GM12878 (cell line): ENCODE measurements at regions of chr1 and their contacts with region 1.

Region 1: DNA sequence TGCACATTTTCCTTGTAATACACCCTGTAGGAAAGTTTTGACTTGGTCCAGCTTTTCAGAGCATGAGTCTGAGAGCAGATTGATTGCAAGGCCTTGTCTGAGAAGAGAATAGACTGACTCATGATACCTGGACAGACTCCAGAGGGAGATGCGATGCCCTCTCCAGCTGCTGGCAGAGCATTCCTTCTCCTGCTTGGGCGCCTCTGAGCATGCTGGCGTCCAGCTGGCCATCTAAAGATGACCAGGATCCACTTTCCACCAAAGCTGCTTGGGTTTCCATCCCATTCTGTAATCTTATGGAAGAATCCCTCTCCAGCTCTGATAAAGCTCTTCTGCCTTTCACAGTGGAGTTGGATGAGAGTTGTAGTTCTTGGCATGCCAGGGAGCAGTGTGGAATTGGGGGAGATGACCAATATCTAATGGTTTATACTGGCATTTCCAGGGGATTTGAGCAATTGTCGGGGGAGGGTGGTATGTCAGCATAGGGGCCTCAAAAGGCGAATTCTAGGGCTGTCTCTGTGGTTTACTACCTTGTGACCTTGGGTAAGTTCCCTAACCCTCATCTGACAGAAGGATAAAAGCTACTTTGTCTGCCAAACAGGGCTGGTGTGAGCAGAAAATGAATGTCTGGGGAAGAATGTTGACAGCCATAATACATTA is 19.5 kb downstream of the SZRD1 start:
- DNase-seq: no peak
- ATAC-seq: peak; percentile 57
- H3K4me3 ChIP-seq: peak overlapping the region; percentile 44
- H3K27ac ChIP-seq: peak overlapping the region; percentile 77
- H3K4me1 ChIP-seq: peaks cover 37% of the 10 kb centered on the region
- H3K27me3 ChIP-seq: no peaks in the 10 kb centered on the region
- CTCF ChIP-seq: no peak
- EP300 ChIP-seq: no peak
- POLR2A ChIP-seq: no peak
- RAD21 ChIP-seq: no peak

Region 2: DNA sequence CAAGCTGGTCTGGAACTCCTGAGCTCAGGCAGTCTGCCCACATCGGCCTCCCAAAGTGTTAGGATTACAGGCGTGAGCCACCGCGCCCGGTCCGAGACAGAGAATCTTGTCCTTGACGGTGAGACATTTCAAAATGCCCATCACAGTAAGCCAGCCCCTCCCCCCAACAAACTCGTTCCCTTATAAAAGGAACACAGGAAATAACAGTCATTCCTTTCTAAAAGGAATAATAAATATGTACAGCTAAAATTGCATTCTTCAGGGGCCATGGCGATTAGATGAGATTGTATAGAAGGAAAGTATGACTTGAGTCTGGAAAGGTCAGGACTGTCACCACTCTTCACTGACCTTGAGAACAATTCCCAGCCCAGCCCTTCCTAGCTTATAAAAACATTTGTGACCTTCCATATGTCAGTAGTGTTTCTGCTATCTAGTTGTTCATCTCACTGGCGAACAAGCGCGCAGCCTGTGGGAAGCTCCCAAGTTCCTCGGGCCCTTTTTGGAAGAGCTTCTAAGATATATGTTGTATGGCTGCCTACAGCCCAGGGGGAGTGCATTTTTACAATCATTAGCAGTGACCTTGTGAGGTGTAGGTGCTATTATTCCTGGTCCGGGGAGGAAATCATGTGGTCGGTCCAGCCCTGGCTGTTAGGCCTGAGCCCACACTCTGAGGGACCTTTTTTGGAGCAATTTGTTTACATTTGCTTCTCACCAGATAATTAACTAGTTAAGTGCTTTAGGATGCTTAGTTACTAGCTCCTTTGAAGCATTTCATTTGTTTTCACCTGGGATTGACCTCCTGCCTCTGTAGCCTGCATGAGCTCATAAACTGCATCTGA is 10.8 kb before region 1 on chr1:
- CTCF ChIA-PET with region 1: interaction called, 30 read pairs
- POLR2A ChIA-PET with region 1: interaction called, 10 read pairs
- RAD21 ChIA-PET with region 1: interaction called, 17 read pairs
- SMC1A ChIA-PET with region 1: interaction called, 37 read pairs
- in situ Hi-C with region 1: no loop called
- intact Hi-C with region 1: no loop called
- DNase-seq: no peak
- ATAC-seq: no peak
- H3K4me3 ChIP-seq: no peak overlapping the region
- H3K27ac ChIP-seq: no peak overlapping the region
- H3K4me1 ChIP-seq: peaks cover 9% of the 10 kb centered on the region
- H3K27me3 ChIP-seq: no peaks in the 10 kb centered on the region
- CTCF ChIP-seq: no peak
- EP300 ChIP-seq: no peak
- POLR2A ChIP-seq: no peak
- RAD21 ChIP-seq: no peak

Region 3: GRCh38 chr1:16409536-16410152 is 23.1 kb after region 1 on chr1:
- CTCF ChIA-PET with region 1: no interaction called
- POLR2A ChIA-PET with region 1: interaction called, 5 read pairs
- RAD21 ChIA-PET with region 1: interaction called, 10 read pairs
- SMC1A ChIA-PET with region 1: interaction called, 11 read pairs
- in situ Hi-C with region 1: no loop called
- intact Hi-C with region 1: no loop called
- DNase-seq: no peak
- ATAC-seq: no peak
- H3K4me3 ChIP-seq: no peak overlapping the region
- H3K27ac ChIP-seq: no peak overlapping the region
- H3K4me1 ChIP-seq: no peaks in the 10 kb centered on the region
- H3K27me3 ChIP-seq: peaks cover 0 to 2% of the 10 kb centered on the region in 2 experiments; a peak in 1 of 4 replicates
- CTCF ChIP-seq: no peak
- EP300 ChIP-seq: no peak
- POLR2A ChIP-seq: no peak
- RAD21 ChIP-seq: no peak

Region 4: DNA sequence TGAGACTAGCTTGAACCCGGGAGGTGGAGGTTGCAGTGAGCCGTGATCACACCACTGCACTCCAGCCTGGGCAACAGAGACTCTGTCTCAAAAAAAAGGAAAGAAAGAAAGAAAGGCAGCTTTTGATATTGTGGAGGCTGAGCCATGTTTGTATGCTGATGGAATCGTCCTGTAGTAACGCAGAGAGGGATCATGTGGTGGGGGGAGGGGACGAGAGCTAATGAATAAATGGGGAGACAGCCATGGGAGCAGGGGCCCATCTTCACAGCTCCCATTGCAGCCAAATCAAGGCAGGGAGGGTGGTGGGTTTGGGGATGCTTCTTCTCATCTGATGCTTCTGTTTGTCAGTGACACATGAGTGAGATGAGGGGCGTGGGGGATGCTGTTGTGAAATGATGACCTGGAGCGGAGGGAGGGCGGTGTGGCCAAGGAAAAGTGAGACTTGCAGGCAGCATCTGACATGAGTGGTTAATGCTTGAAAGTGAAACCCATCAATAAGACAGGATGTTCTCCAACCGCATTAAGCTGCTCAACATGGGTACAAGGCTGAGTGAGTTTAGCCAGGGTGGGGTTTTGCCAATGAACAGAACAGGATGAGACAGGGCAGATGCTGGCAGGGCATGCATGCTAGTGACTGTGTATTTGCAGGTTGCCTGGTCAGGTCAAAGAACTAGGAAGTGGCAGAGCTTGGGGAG is 34.0 kb after region 1 on chr1:
- CTCF ChIA-PET with region 1: interaction called, 4 read pairs
- POLR2A ChIA-PET with region 1: no interaction called
- RAD21 ChIA-PET with region 1: interaction called, 10 read pairs
- SMC1A ChIA-PET with region 1: interaction called, 13 read pairs
- in situ Hi-C with region 1: no loop called
- intact Hi-C with region 1: no loop called
- DNase-seq: peak; percentile 84
- ATAC-seq: peak; percentile 97
- H3K4me3 ChIP-seq: peak overlapping the region; percentile 23; the same call in 1 of the 2 replicates
- H3K27ac ChIP-seq: no peak overlapping the region
- H3K4me1 ChIP-seq: peaks cover 18% of the 10 kb centered on the region
- H3K27me3 ChIP-seq: no peaks in the 10 kb centered on the region
- CTCF ChIP-seq: no peak
- EP300 ChIP-seq: no peak
- POLR2A ChIP-seq: no peak
- RAD21 ChIP-seq: no peak